ENCODE measurements at regions of chr4 and their contacts with region 1.

Region 1: GRCh38 chr4:146899722-146900121 is 45.9 kb downstream of the TTC29 start:
- DNase-seq: no peak
- ATAC-seq: no peak
- H3K4me3 ChIP-seq: no peak overlapping the region
- H3K27ac ChIP-seq: no peak overlapping the region
- H3K4me1 ChIP-seq: no peaks in the 10 kb centered on the region
- H3K27me3 ChIP-seq: peaks cover 0 to 11% (median 4%) of the 10 kb centered on the region in 7 donors
- CTCF ChIP-seq: no peak

Region 2: GRCh38 chr4:146333187-146333894 is 566.4 kb before region 1 on chr4:
- intact Hi-C with region 1: loop called in 1 of 10 experiments (anchors 10 kb)
- DNase-seq: no peak
- ATAC-seq: no peak
- H3K4me3 ChIP-seq: no peak overlapping the region
- H3K27ac ChIP-seq: no peak overlapping the region
- H3K4me1 ChIP-seq: peaks cover 0 to 49% (median 3%) of the 10 kb centered on the region in 9 donors
- H3K27me3 ChIP-seq: no peaks in the 10 kb centered on the region
- CTCF ChIP-seq: no peak

Region 3: GRCh38 chr4:146776691-146777090 is 123.0 kb before region 1 on chr4:
- intact Hi-C with region 1: no loop called
- DNase-seq: no peak
- ATAC-seq: no peak
- H3K4me3 ChIP-seq: no peak overlapping the region
- H3K27ac ChIP-seq: no peak overlapping the region
- H3K4me1 ChIP-seq: no peaks in the 10 kb centered on the region
- H3K27me3 ChIP-seq: no peaks in the 10 kb centered on the region
- CTCF ChIP-seq: no peak